ENCODE measurements at regions of chr5 and their contacts with region 1.

Region 1: DNA sequence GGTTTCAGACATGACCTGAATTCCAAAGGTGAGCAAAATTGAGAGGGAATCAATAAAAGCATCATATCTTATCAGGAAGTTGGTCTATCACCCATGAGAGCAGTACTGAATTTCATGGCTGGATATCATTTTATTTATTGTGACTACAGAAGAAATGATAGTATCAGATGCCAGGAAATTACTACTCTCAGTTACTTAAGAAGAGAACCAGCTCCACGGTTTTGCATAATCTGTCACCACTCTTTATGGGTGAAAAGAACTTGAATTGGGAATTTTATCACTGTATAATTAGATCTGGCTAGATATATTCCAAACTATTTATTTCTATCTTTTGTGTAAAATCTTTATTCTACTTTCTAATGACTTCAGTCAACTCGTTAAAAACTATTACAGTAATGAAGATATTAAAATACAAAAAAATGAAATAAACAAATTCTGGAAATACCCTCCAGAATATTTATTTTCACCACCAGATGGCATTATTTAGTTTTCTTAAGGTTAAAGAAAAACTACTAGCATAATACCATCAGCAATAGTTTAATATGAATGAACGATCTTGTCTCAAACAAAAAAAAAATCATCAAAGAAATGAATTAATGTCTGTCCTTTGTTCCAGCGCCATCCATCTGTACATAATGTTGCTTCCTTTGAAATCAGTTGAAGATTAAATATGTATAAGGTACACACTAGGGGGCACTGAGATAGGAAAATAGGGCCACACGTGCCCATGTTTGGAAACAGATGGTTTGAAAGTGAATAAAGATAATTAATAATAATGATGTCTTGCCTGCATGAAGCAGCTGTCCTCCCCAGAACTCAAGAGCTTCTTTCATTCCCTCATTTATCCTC is 84.7 kb upstream of the SLCO6A1 start:
- DNase-seq: no peak
- ATAC-seq: no peak
- H3K4me3 ChIP-seq: no peak overlapping the region
- H3K27ac ChIP-seq: no peak overlapping the region
- H3K4me1 ChIP-seq: no peaks in the 10 kb centered on the region
- H3K27me3 ChIP-seq: no peaks in the 10 kb centered on the region; a peak in 1 of 5 replicates
- CTCF ChIP-seq: no peak
- EP300 ChIP-seq: no peak
- POLR2A ChIP-seq: no peak
- RAD21 ChIP-seq: no peak

Region 2: DNA sequence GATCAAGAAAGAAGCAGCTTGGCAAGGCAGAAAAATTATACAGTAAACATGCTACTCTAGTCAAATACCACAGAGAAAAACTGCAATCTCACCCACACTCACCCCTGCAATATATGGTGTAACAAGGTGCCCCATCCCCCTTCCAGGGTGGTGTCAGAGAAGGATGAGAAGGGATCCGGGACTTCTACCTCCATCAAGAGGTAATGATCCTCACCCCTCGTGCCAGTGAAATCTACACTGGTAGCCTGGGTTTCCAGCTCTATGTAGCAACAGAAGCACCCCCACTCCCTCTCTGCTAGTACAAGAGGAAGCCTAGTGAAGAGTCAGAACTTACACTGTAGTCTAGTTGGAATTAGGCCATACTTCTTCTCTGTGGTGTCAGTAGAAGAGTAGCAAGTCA is 306.4 kb before region 1 on chr5:
- CTCF ChIA-PET with region 1: no interaction called
- POLR2A ChIA-PET with region 1: no interaction called
- in situ Hi-C with region 1: no loop called
- intact Hi-C with region 1: no loop called
- DNase-seq: no peak
- ATAC-seq: no peak
- H3K4me3 ChIP-seq: no peak overlapping the region
- H3K27ac ChIP-seq: no peak overlapping the region
- H3K4me1 ChIP-seq: 0 out of 2 replicates have a peak, but pooled peaks cover under 1% of the 10 kb centered on the region
- H3K27me3 ChIP-seq: no peaks in the 10 kb centered on the region
- CTCF ChIP-seq: no peak
- EP300 ChIP-seq: no peak
- POLR2A ChIP-seq: no peak
- RAD21 ChIP-seq: no peak

Region 3: GRCh38 chr5:102670224-102670836 is 86.8 kb after region 1 on chr5:
- CTCF ChIA-PET with region 1: no interaction called
- POLR2A ChIA-PET with region 1: no interaction called
- in situ Hi-C with region 1: no loop called
- intact Hi-C with region 1: loop called (anchors 1 kb)
- DNase-seq: peak; percentile 22
- ATAC-seq: peak; percentile 95
- H3K4me3 ChIP-seq: peak overlapping the region; percentile 47 to 54 (median 48); a peak in 5 of 6 replicates
- H3K27ac ChIP-seq: no peak overlapping the region
- H3K4me1 ChIP-seq: no peaks in the 10 kb centered on the region
- H3K27me3 ChIP-seq: no peaks in the 10 kb centered on the region
- CTCF ChIP-seq: peak; percentile 75
- EP300 ChIP-seq: no peak
- POLR2A ChIP-seq: no peak
- RAD21 ChIP-seq: no peak

Region 4: DNA sequence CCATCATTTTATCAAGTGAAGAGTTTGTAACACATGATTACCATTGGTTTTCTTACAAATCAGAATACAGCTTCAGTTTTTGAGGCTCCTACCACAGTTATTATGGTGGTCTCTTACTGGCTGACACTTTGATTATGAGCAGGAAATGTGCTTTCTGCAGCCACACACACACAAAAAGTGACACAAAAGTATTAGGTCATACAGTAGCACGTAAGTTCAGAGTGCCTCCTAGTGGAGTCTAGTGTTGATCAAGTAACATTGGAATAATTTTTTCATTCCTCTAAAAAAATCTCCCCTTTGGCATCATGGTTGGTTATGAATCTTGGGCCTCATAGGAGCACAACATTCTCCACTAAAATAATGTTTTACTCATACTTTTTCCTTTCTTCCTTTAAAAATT is 209.2 kb after region 1 on chr5:
- CTCF ChIA-PET with region 1: no interaction called
- POLR2A ChIA-PET with region 1: no interaction called
- in situ Hi-C with region 1: no loop called
- intact Hi-C with region 1: loop called (anchors 10 kb)
- DNase-seq: peak; percentile 12
- ATAC-seq: no peak
- H3K4me3 ChIP-seq: no peak overlapping the region
- H3K27ac ChIP-seq: no peak overlapping the region
- H3K4me1 ChIP-seq: peaks cover 48% of the 10 kb centered on the region
- H3K27me3 ChIP-seq: no peaks in the 10 kb centered on the region
- CTCF ChIP-seq: peak; percentile 36
- EP300 ChIP-seq: no peak
- POLR2A ChIP-seq: no peak
- RAD21 ChIP-seq: no peak

Measured in HepG2 (cell line).